ENCODE measurements at regions of chr12 and their contacts with region 1.

Region 1: DNA sequence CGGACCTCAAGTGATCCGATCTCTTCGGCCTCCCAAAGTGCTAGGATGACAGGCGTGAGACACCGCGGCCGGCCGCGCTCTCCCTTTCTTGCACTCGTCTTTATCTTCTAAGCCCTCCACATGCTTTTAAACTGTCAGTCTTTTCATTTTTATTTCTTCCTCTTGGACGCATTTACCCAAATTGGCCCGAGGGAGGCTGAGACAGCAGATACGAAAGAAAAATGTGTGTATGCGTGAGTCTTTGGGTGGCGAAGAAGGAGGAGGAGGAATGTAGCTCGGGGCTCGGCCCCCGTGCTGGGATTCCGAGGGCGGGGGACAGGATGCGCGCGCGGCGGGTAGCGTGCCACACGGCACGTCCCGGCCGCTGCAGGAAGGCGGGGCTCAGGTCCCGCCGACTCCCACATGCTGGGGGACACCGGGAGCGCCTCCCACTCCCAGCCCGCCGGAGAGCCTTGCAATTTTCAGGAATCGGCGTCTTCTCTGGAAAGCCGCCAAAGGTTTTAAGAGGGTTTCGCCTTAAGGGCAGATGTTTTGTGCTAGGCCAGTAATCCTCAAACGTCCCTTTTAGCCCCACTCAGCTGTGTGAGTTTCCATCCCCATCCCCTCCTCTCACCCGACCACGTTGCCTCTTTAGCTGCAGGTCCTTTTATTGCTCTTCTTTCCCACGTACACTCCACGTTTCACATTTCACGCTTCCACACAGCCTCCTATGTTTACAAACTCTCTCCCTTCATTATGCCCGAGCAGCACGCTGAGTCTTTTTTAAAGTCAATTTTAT is 34.7 kb upstream of the SLC2A3 start:
- DNase-seq: peak; percentile 96
- H3K4me3 Mint-ChIP-seq: peak overlapping the region; percentile 88
- H3K27ac Mint-ChIP-seq: peak overlapping the region; percentile 100
- H3K4me1 Mint-ChIP-seq: peaks cover 33% of the 10 kb centered on the region
- H3K27me3 Mint-ChIP-seq: no peaks in the 10 kb centered on the region

Region 2: DNA sequence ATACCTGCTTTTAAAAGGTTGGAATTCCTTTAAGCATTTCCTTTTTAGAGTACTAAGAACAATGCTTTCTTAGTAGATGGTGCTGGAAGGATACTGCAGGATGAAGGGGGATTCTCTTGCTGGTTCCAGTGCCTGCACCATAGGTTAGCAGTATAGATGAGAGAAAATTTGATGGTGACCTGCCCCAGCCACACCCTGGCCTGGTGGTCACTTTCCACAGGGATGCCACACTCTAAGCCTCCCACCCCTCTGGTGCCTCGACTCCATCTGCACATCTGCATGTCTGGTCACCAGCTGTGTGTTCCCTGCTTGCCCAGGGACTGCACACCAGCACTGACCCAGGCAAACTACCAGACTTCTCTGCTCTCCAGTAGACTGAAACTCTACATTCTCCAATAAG is 53.7 kb before region 1 on chr12:
- intact Hi-C with region 1: no loop called
- DNase-seq: peak; percentile 59
- H3K4me3 Mint-ChIP-seq: no peak overlapping the region
- H3K27ac Mint-ChIP-seq: peak overlapping the region; percentile 51
- H3K4me1 Mint-ChIP-seq: peaks cover 17% of the 10 kb centered on the region
- H3K27me3 Mint-ChIP-seq: no peaks in the 10 kb centered on the region

Region 3: DNA sequence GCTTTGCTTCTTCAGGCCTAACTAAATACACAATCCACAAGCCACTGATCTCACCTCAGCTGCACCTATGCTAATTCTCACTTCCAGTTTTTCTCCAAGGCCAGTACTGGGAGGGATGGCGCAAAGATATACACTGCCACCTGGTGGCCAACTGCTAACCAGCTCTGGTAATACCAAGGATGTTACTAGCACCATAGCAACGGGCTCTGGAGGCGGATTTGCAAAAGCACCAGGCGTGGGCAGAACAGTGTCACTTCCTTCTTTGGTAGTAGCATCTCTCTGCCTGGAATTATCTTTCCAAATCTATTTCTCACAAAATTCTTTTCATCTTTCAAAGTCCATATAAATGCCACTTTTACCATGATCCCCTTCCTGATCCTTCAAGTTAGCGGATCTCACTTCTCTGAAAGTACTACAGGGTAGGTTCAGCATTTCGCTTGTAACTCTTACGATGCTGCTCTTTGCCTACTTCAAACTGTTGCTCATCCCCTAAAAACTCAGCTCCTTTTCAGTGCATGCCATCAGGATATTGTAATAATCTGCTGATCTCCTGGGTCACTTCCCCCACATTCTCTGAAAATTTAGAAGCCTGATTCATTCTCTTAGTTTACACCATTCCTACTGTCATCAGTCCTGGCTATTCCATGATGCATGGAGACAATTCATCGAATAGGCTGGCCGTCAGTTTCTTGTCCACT is 24.8 kb after region 1 on chr12:
- intact Hi-C with region 1: loop called (anchors 1 kb)
- DNase-seq: peak; percentile 94
- H3K4me3 Mint-ChIP-seq: no peak overlapping the region
- H3K27ac Mint-ChIP-seq: no peak overlapping the region
- H3K4me1 Mint-ChIP-seq: peaks cover 22% of the 10 kb centered on the region
- H3K27me3 Mint-ChIP-seq: no peaks in the 10 kb centered on the region

Region 4: GRCh38 chr12:8026291-8026900 is 55.7 kb after region 1 on chr12:
- intact Hi-C with region 1: loop called (anchors 2 kb)
- DNase-seq: peak; percentile 99
- H3K4me3 Mint-ChIP-seq: peak overlapping the region; percentile 91
- H3K27ac Mint-ChIP-seq: peak overlapping the region; percentile 100
- H3K4me1 Mint-ChIP-seq: peaks cover 18% of the 10 kb centered on the region
- H3K27me3 Mint-ChIP-seq: no peaks in the 10 kb centered on the region